Naive thymus-derived CD4-positive, alpha-beta T cell (primary cell): ENCODE measurements at regions of chr15 and their contacts with region 1.

Region 1: DNA sequence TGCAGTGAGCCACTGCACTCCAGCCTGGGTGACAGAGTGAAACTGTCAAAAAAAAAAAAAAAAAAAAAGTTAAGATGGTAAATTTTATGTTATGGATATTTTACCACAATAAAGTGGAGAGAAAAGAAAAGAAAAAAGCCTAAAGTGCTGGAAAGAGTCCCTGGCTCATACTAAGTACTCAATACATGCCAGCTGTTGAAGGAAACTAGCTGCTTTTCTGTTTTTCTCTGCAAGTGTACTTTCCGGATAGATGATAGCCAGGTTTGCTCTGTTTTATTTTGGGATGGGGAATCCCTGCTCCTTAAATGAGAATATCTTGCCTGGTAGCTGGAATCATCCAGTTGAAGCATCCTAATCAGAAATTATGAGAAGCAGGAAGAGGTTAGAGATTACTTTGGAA is 10.9 kb downstream of the EID1 start:
- DNase-seq: no peak
- ATAC-seq: no peak
- H3K4me3 ChIP-seq: no peak overlapping the region
- H3K4me3 Mint-ChIP-seq: no peak overlapping the region
- H3K27ac ChIP-seq: no peak overlapping the region
- H3K27ac Mint-ChIP-seq: no peak overlapping the region
- H3K4me1 ChIP-seq: no peaks in the 10 kb centered on the region
- H3K4me1 Mint-ChIP-seq: peaks cover 0 to 18% (median 0%) of the 10 kb centered on the region in 7 donors
- H3K27me3 ChIP-seq: no peaks in the 10 kb centered on the region
- H3K27me3 Mint-ChIP-seq: peaks cover 0 to 37% (median 21%) of the 10 kb centered on the region in 5 donors

Region 2: DNA sequence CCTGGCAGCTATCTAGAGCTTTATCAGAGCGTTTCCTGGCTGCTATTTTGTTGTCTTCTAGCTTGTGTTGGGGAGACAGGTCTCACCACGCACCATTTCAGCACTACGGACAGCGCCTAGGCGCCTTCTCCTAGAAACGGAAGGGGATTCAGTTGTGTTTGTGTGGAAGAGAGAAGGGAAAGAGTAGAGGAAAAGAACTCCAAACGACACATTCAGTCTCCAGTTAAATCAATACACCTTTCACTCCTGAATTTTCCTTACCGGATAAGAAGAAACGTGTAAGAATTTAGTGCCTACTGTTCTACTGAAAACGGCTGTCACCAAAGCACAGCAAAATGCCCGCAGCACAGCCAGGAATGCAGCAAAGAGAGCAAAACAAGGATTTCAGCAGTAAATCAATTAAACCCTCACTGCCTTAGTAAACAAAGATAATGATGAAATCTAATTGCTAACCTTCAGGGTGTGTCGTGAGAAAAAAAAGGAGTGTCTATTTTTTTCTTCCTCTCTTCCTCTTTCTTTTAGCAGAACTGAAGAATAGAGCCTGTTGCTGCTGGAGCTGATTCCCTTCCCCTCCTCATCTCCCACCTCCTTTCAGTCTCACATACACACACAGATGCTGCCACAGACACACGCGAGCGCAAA is 697.8 kb before region 1 on chr15:
- CTCF ChIA-PET with region 1: no interaction called
- POLR2A ChIA-PET with region 1: no interaction called
- intact Hi-C with region 1: loop called in 1 of 2 experiments (anchors 5 kb)
- DNase-seq: peak in 5 of 9 donors; percentile 4 to 52 (median 11)
- ATAC-seq: no peak
- H3K4me3 ChIP-seq: no peak overlapping the region
- H3K4me3 Mint-ChIP-seq: peak overlapping the region in 2 of 10 donors; percentile 4 to 26
- H3K27ac ChIP-seq: no peak overlapping the region
- H3K27ac Mint-ChIP-seq: no peak overlapping the region
- H3K4me1 ChIP-seq: no peaks in the 10 kb centered on the region
- H3K4me1 Mint-ChIP-seq: peaks cover 0 to 5% (median 0%) of the 10 kb centered on the region in 7 donors
- H3K27me3 ChIP-seq: peaks cover 0 to 6% of the 10 kb centered on the region in 2 donors
- H3K27me3 Mint-ChIP-seq: peaks cover 31 to 66% (median 55%) of the 10 kb centered on the region in 5 donors

Region 3: DNA sequence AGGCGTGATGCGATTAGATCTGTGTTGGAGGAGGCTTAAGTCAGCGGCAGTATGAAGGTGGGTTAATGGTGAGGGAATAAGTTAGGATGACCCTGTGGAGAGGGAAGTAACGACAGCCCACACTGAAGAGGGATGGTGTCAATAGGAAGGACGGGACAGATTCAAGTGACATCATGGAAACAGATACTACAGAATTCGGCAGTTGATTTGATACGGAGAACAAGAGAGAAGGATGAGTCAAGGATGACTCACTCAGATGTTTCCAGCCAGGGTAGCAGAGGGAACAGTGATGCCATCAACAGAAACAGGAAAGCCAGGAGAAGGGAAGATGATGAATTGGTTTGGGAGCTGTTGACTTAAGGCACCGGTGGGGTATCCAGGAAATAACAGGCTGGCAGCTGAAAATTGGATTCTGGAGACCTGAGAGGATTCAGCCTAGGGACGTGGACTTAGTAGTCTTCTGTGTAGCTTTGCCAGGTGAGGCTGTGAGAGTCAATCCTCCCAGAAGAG is 36.9 kb after region 1 on chr15:
- CTCF ChIA-PET with region 1: no interaction called
- POLR2A ChIA-PET with region 1: no interaction called
- intact Hi-C with region 1: loop called in 1 of 2 experiments (anchors 5 kb)
- DNase-seq: peak in 1 of 9 donors; percentile 40
- ATAC-seq: no peak
- H3K4me3 ChIP-seq: no peak overlapping the region
- H3K4me3 Mint-ChIP-seq: peak overlapping the region in 1 of 10 donors; percentile 11
- H3K27ac ChIP-seq: no peak overlapping the region
- H3K27ac Mint-ChIP-seq: peak overlapping the region in 1 of 9 donors; percentile 79
- H3K4me1 ChIP-seq: no peaks in the 10 kb centered on the region
- H3K4me1 Mint-ChIP-seq: peaks cover 0 to 42% (median 0%) of the 10 kb centered on the region in 7 donors
- H3K27me3 ChIP-seq: no peaks in the 10 kb centered on the region
- H3K27me3 Mint-ChIP-seq: peaks cover 0 to 42% (median 28%) of the 10 kb centered on the region in 5 donors